ENCODE measurements at regions of chr3 and their contacts with region 1.

Region 1: GRCh38 chr3:33883538-33883950 is 85.1 kb downstream of the PDCD6IP start:
- DNase-seq: no peak
- H3K4me3 ChIP-seq: peak overlapping the region in 2 of 8 donors; percentile 10 to 36
- H3K27ac ChIP-seq: no peak overlapping the region
- H3K4me1 ChIP-seq: peaks cover 0 to 8% (median 5%) of the 10 kb centered on the region in 6 donors
- H3K27me3 ChIP-seq: peaks cover 0 to 8% (median 0%) of the 10 kb centered on the region in 7 donors
- CTCF ChIP-seq: peak; percentile 45 to 88 (median 83)
- POLR2A ChIP-seq: no peak

Region 2: DNA sequence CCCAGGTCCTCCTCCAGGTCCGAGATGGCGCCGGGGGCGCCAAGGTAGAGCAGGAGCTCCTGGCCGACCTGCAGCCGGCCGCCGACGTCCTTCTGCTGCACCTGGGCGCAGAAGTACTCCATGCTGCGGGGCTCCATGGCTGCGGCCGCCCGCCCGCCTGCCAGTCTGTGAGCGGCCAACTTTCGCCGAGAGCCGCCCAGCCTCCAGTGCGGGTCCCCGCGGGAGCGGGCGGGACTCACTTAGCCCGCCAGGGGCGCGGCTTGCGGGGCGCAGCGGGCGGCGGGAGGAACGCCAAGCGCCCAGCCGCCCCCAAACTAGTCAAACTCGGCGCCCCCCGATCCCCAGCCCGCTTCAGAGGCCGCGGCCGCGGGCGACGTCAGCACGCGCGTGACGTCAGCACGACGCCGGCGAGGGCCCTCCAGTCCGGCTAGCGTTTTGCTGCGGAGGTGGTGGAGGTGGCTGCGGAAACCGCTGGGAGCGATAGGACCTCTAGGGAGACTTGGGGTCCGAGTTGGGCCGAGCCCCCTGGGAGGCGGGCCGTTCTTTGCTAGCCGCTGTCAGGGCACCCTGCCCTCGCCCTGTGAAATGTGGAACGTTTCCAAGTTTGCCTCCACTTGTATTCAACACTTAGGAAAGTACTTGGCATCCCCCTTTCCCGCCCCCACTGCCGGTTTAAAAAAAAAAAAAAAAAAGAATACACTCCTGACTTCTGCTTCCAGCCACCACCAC is 165.5 kb before region 1 on chr3 and contains the start of gene CLASP2:
- intact Hi-C with region 1: no loop called
- DNase-seq: peak; percentile 97
- H3K4me3 ChIP-seq: peak within 1 kb of the TSS; percentile 61 to 94 (median 74)
- H3K27ac ChIP-seq: peak within 1 kb of the TSS; percentile 90 to 99 (median 98)
- H3K4me1 ChIP-seq: peaks cover 8 to 53% (median 26%) of the 10 kb centered on the region in 6 donors
- H3K27me3 ChIP-seq: no peaks in the 10 kb centered on the region
- CTCF ChIP-seq: peak in 7 of 11 experiments; percentile 4 to 40 (median 24)
- POLR2A ChIP-seq: peak; percentile 25 to 50 (median 47)
- total RNA-seq, gene CLASP2: 54.5 to 200 (median 75.6) TPM

Region 3: GRCh38 chr3:34683851-34684250 is 800.3 kb after region 1 on chr3:
- intact Hi-C with region 1: loop called (anchors 10 kb)
- DNase-seq: no peak
- H3K4me3 ChIP-seq: no peak overlapping the region
- H3K27ac ChIP-seq: no peak overlapping the region
- H3K4me1 ChIP-seq: no peaks in the 10 kb centered on the region
- H3K27me3 ChIP-seq: no peaks in the 10 kb centered on the region
- CTCF ChIP-seq: peak in 8 of 11 experiments; percentile 9 to 53 (median 33)
- POLR2A ChIP-seq: no peak